Gastrocnemius medialis (tissue), 4 donors: ENCODE measurements at regions of chr20 and their contacts with region 1.

Region 1: GRCh38 chr20:5886788-5887187 is 63.5 kb downstream of the TRMT6 start:
- DNase-seq: peak; percentile 83 to 86
- ATAC-seq: peak; percentile 72 to 83
- H3K4me3 ChIP-seq: no peak overlapping the region
- H3K27ac ChIP-seq: peak overlapping the region; percentile 88 to 94 (median 92)
- H3K4me1 ChIP-seq: peaks cover 43 to 48% of the 10 kb centered on the region in 2 donors
- H3K27me3 ChIP-seq: no peaks in the 10 kb centered on the region
- CTCF ChIP-seq: no peak
- POLR2A ChIP-seq: peak in 1 of 2 donors; percentile 32

Region 2: DNA sequence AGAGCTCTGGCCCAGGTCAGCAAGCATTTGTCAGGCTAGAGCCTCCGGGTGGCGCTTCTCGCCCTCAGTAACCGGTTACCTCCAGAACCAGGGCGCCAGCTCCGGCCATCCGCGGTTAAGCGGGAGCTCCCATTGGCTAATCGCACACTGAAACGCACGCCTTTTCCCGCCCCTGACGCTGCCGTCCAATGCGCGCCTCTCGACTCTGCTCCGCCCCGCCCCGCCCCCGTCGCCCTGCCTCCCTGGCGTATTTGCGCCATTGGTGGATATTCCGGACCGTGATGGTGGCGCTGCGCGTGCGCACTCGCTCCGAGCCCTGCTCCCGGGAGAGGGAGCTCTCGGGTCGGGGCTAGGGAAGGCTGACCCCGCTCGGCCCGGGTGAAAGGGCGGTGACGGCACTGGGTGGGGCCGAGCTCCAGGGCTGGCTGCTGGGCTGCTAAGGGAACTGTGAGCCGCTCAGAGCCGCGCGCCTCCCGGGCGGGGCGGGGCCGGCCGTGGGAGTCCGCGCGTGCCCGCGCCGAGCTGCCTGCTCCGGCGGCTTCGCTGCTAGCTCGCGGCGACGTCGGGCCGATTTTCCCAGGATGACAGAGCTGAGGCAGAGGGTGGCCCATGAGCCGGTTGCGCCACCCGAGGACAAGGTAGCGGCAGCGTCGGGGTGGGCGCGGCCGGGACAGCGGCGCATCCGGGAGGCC is 760.1 kb before region 1 on chr20 and contains the start of gene CDS2:
- in situ Hi-C with region 1: no loop called
- intact Hi-C with region 1: loop called (anchors 10 kb)
- DNase-seq: peak; percentile 100
- ATAC-seq: peak; percentile 85 to 86
- H3K4me3 ChIP-seq: peak within 1 kb of the TSS; percentile 73 to 89 (median 82)
- H3K27ac ChIP-seq: peak within 1 kb of the TSS; percentile 92 to 99 (median 95)
- H3K4me1 ChIP-seq: peaks cover 20 to 34% of the 10 kb centered on the region in 2 donors
- H3K27me3 ChIP-seq: no peaks in the 10 kb centered on the region
- CTCF ChIP-seq: peak; percentile 47 to 75 (median 60)
- POLR2A ChIP-seq: peak; percentile 95
- total RNA-seq, gene CDS2: 9.0 to 18.5 (median 14.5) TPM

Region 3: GRCh38 chr20:5539691-5540090 is 347.1 kb before region 1 on chr20:
- in situ Hi-C with region 1: no loop called
- intact Hi-C with region 1: no loop called
- DNase-seq: no peak
- ATAC-seq: no peak
- H3K4me3 ChIP-seq: no peak overlapping the region
- H3K27ac ChIP-seq: no peak overlapping the region
- H3K4me1 ChIP-seq: no peaks in the 10 kb centered on the region
- H3K27me3 ChIP-seq: no peaks in the 10 kb centered on the region
- CTCF ChIP-seq: no peak
- POLR2A ChIP-seq: no peak

Region 4: GRCh38 chr20:5766085-5766764 is 120.6 kb before region 1 on chr20:
- in situ Hi-C with region 1: loop called in 1 of 4 experiments (anchors 5 kb)
- intact Hi-C with region 1: loop called (anchors 2 kb)
- DNase-seq: peak; percentile 83 to 91
- ATAC-seq: peak; percentile 89 to 95
- H3K4me3 ChIP-seq: no peak overlapping the region
- H3K27ac ChIP-seq: peak overlapping the region; percentile 89 to 92 (median 90)
- H3K4me1 ChIP-seq: peaks cover 11 to 28% of the 10 kb centered on the region in 2 donors
- H3K27me3 ChIP-seq: no peaks in the 10 kb centered on the region
- CTCF ChIP-seq: no peak
- POLR2A ChIP-seq: peak in 1 of 2 donors; percentile 41

Region 5: DNA sequence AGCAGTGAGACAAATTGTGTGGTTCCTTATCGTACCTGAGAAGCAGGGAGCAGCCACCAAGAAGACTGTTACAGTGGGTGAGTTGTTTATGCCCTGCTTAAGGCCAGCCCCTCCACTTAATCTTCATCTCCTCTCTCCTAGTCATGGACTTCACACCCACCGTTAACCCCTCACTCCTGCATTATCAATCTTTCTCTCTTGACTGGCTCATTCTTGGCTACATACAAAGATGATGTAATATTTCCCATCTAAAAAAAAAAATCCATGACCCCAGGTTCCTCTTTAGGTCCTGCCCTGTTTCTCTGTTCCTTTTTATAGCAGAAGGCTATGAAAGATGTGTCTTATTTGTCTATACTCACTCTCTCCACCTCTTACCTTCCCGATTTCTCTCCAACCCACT is 64.2 kb before region 1 on chr20:
- in situ Hi-C with region 1: no loop called
- intact Hi-C with region 1: loop called (anchors 2 kb)
- DNase-seq: no peak
- ATAC-seq: no peak
- H3K4me3 ChIP-seq: no peak overlapping the region
- H3K27ac ChIP-seq: peak overlapping the region in 1 of 4 donors; percentile 54
- H3K4me1 ChIP-seq: peaks cover 23 to 25% of the 10 kb centered on the region in 2 donors
- H3K27me3 ChIP-seq: no peaks in the 10 kb centered on the region
- CTCF ChIP-seq: no peak
- POLR2A ChIP-seq: no peak

Region 6: GRCh38 chr20:5950271-5951031 is 63.7 kb after region 1 on chr20 and contains the starts of genes MCM8 and TRMT6:
- in situ Hi-C with region 1: no loop called
- intact Hi-C with region 1: loop called (anchors 5 kb)
- DNase-seq: peak; percentile 94 to 95
- ATAC-seq: peak; percentile 97 to 98
- H3K4me3 ChIP-seq: peak within 1 kb of the TSS; percentile 63 to 90 (median 84)
- H3K27ac ChIP-seq: peak within 1 kb of the TSS; percentile 85 to 89 (median 86)
- H3K4me1 ChIP-seq: peaks cover 16 to 18% of the 10 kb centered on the region in 2 donors
- H3K27me3 ChIP-seq: no peaks in the 10 kb centered on the region
- CTCF ChIP-seq: peak in 1 of 5 experiments; percentile 24
- POLR2A ChIP-seq: peak; percentile 60 to 67
- total RNA-seq, gene MCM8: 2.4 to 5.9 (median 5.2) TPM
- total RNA-seq, gene TRMT6: 16.5 to 27.5 (median 19.0) TPM